ENCODE measurements at regions of chr4 and their contacts with region 1.

Region 1: GRCh38 chr4:2220016-2220630 is 21.8 kb downstream of the HAUS3 start:
- DNase-seq: peak; percentile 64 to 87 (median 83)
- ATAC-seq: peak; percentile 99
- H3K4me3 ChIP-seq: no peak overlapping the region
- H3K4me3 Mint-ChIP-seq: no peak overlapping the region
- H3K27ac ChIP-seq: no peak overlapping the region
- H3K27ac Mint-ChIP-seq: no peak overlapping the region
- H3K4me1 ChIP-seq: no peaks in the 10 kb centered on the region
- H3K4me1 Mint-ChIP-seq: peaks cover 4% of the 10 kb centered on the region
- H3K27me3 ChIP-seq: no peaks in the 10 kb centered on the region
- H3K27me3 Mint-ChIP-seq: no peaks in the 10 kb centered on the region
- CTCF ChIP-seq: peak; percentile 90

Region 2: DNA sequence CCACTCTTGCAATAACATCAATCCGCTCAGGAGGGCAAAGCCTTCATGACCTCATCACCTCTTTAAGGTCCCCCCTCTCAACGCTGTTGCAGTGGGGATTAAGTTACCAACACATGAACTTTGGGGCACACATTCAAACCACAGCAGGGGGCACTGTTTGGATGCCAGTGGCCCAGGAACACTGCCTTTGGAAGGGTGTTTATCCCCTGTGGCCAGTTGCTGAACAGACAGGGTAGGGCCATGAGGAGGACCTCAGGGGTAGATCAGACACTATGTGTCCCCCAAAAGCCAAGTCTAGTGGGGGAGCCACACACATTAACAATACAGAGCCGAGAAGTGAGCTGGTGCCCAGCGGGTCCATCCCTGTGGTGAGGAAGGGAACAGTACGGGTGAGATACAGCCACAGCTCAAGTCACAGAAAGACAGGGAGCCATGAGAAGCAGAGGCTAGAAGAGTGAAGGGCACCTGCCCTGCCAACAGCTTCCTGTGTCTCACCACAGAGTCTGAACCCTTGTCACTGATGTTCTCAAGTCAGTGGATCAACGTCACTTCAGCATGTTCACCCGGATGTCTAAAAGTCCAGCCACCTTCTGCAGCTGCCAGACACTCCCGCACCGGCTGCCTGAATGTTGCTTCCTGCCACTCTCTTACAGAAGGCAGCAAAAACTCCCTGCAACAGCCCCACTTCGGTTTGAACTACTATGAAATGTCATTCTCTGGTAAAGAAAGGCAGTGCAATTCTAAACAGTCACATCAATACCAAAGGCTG is 61.6 kb after region 1 on chr4:
- CTCF ChIA-PET with region 1: interaction called, 6 read pairs
- POLR2A ChIA-PET with region 1: no interaction called
- intact Hi-C with region 1: loop called in 1 of 2 experiments (anchors 5 kb)
- DNase-seq: peak; percentile 73 to 98 (median 85)
- ATAC-seq: peak; percentile 83
- H3K4me3 ChIP-seq: peak overlapping the region in 1 of 2 experiments; percentile 30
- H3K4me3 Mint-ChIP-seq: peak overlapping the region; percentile 78
- H3K27ac ChIP-seq: peak overlapping the region; percentile 67 to 94
- H3K27ac Mint-ChIP-seq: peak overlapping the region; percentile 99
- H3K4me1 ChIP-seq: peaks cover 46% of the 10 kb centered on the region
- H3K4me1 Mint-ChIP-seq: peaks cover 41% of the 10 kb centered on the region
- H3K27me3 ChIP-seq: no peaks in the 10 kb centered on the region
- H3K27me3 Mint-ChIP-seq: no peaks in the 10 kb centered on the region
- CTCF ChIP-seq: peak; percentile 72

Region 3: DNA sequence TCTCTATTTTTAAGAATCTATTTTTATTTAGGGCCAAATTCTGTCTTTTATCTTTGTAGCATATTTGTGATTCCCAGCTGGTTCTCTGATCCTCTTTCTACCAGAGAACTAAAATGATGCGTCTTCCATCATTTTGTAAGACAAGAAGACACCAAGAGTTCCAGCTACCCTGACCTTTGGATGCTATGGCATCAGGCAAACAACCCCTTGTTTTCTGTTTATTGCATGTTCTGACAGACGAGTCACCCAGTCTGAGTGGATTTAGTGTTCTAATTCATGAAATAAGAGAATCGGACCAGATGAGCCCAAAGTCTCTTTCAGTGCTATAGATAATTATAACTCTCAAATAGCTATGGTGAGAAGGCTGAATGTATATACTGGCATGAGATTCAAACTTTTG is 128.7 kb after region 1 on chr4:
- CTCF ChIA-PET with region 1: interaction called, 77 read pairs
- POLR2A ChIA-PET with region 1: no interaction called
- intact Hi-C with region 1: no loop called
- DNase-seq: no peak
- ATAC-seq: no peak
- H3K4me3 ChIP-seq: no peak overlapping the region
- H3K4me3 Mint-ChIP-seq: no peak overlapping the region
- H3K27ac ChIP-seq: no peak overlapping the region
- H3K27ac Mint-ChIP-seq: no peak overlapping the region
- H3K4me1 ChIP-seq: peaks cover 3% of the 10 kb centered on the region
- H3K4me1 Mint-ChIP-seq: peaks cover 7% of the 10 kb centered on the region
- H3K27me3 ChIP-seq: no peaks in the 10 kb centered on the region
- H3K27me3 Mint-ChIP-seq: no peaks in the 10 kb centered on the region
- CTCF ChIP-seq: no peak

Region 4: DNA sequence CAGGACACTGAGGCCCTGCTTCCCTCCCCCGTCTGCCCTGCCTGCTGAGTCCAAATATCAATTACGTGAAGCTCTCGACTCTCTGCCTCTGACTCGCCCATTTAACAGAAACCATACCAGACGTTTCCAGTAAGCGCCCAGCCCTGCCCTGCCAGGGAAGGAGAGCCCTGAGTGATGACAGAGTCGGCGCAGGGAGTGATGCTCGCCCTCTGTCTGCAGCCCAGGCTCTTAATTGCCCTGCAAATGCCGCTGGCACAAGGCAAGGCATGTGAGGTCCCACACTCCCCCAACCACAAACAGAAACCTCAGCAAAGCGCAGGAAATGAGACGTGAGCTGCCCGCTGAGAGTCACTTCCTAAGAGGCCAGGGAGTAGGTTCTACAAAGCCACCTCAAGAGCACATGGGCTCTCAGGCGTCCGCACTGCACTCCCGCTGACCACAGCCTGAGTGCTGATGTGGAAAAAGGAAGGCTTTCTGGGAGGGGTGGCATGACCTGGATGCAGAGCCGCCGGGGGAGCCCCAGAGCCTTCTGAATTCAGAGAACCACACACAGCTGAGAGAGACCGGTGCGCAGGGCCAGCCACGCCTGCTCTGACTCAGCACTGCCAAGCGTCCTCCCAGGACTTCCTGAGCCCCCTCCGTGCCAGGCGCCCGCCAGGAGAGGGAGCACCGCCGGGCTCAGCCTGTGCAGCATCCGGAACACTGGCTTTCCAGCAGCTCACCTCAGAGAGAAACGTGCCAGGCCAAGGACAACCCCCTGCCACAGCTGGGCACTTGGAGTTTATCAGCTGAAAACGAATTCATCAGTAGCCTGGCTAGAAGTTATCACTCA is 193.0 kb after region 1 on chr4:
- CTCF ChIA-PET with region 1: interaction called, 11 read pairs
- POLR2A ChIA-PET with region 1: interaction called, 4 read pairs
- intact Hi-C with region 1: loop called in 1 of 2 experiments (anchors 1 kb)
- DNase-seq: peak; percentile 71 to 98 (median 86)
- ATAC-seq: peak; percentile 77
- H3K4me3 ChIP-seq: peak overlapping the region; percentile 25 to 38
- H3K4me3 Mint-ChIP-seq: peak overlapping the region; percentile 73
- H3K27ac ChIP-seq: peak overlapping the region; percentile 87 to 91
- H3K27ac Mint-ChIP-seq: peak overlapping the region; percentile 97
- H3K4me1 ChIP-seq: peaks cover 62% of the 10 kb centered on the region
- H3K4me1 Mint-ChIP-seq: peaks cover 68% of the 10 kb centered on the region
- H3K27me3 ChIP-seq: peaks cover 4 to 7% of the 10 kb centered on the region in 2 experiments
- H3K27me3 Mint-ChIP-seq: peaks cover 4% of the 10 kb centered on the region
- CTCF ChIP-seq: peak; percentile 31

Region 5: GRCh38 chr4:2441393-2442174 is 221.5 kb after region 1 on chr4:
- CTCF ChIA-PET with region 1: interaction called, 35 read pairs
- POLR2A ChIA-PET with region 1: interaction called, 7 read pairs
- intact Hi-C with region 1: loop called in 1 of 2 experiments (anchors 1 kb)
- DNase-seq: peak; percentile 44 to 86 (median 76)
- ATAC-seq: peak; percentile 100
- H3K4me3 ChIP-seq: no peak overlapping the region
- H3K4me3 Mint-ChIP-seq: no peak overlapping the region
- H3K27ac ChIP-seq: no peak overlapping the region
- H3K27ac Mint-ChIP-seq: no peak overlapping the region
- H3K4me1 ChIP-seq: peaks cover 8% of the 10 kb centered on the region
- H3K4me1 Mint-ChIP-seq: peaks cover 2% of the 10 kb centered on the region
- H3K27me3 ChIP-seq: no peaks in the 10 kb centered on the region
- H3K27me3 Mint-ChIP-seq: no peaks in the 10 kb centered on the region
- CTCF ChIP-seq: peak; percentile 82

Measured in CD8-positive, alpha-beta T cell (primary cell).